ENCODE measurements at regions of chr1 and their contacts with region 1.

Region 1: DNA sequence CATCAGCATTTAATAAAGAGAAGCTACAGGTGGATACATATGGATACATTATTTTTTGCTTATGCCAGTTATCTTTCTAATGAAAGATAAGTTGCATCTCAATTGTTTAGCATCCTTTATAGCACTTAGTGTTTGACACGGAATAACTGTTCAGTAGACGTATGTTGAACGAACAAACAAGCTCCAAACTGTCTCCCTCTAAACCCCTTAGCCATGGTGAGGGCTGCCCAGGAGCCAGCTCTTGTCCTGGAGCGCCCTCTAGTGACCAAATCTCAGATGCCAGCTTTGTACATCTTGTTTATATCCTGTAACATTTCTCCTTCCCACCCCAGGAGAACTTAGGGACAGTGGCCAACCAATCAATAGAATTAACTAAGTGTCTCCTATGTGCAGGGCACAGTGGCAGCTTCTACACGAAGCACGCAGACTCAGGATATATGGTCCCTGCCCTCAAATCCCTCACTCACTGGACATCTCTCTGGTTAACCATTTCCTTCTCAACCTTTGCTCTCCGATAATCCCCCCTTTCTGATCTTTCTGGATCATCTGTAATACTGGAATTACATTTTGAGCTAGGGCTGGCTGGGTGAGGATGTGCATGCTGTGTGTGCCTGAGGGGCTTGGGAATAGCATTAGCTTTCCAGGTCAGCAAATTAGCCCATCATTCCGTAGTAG is 22.9 kb downstream of the KCNA10 start:
- H3K4me3 Mint-ChIP-seq: no peak overlapping the region
- H3K27ac Mint-ChIP-seq: no peak overlapping the region
- H3K4me1 Mint-ChIP-seq: peaks cover 30% of the 10 kb centered on the region
- H3K27me3 Mint-ChIP-seq: peaks cover 5% of the 10 kb centered on the region

Region 2: DNA sequence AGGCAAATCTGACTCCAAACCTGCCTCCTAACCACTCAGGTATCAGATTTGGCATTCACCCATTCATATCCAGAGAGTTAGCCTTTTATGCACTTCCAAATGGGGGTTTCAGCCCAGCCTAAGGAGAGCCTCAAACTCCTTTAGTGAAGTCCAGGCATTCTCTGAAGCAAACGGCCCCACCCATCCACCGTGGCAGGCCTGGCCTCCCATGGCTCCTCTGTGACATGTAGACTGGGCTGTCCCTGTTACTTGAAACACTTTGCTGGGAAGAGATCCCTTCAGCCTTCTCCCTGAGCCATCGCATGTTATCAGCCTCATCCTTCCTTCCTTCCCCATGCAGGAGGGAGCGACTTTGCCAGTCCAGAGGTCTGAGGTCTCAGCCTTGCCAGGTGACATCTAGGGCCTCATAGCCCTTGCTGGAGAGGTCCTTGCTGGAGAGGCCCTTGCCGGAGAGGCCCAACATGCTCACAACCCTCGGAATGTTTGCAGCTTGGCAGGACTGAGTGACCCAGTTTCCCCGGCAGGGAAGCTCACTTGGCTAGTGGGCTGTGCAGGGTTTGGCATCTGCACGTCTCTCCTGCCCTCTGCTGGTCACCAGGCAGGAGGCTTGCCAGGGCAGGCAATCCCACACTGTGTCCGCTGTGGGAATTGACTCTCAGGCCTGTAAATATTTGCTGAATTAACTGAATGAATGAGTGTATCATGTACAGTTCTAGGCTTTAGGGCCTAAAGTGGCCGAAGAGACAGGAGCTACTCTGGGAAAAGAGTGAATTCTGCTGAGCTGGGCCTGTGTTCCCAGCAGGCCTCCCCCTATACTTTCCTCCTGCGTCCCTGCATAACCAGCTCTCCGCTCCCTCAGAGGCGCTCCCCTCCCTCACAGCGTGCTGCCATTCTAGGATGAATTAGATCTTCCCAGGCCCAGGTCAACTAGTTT is 183.6 kb before region 1 on chr1:
- intact Hi-C with region 1: loop called (anchors 5 kb)
- H3K4me3 Mint-ChIP-seq: no peak overlapping the region
- H3K27ac Mint-ChIP-seq: no peak overlapping the region
- H3K4me1 Mint-ChIP-seq: peaks cover 14% of the 10 kb centered on the region
- H3K27me3 Mint-ChIP-seq: no peaks in the 10 kb centered on the region

Region 3: GRCh38 chr1:110412576-110412975 is 83.5 kb before region 1 on chr1:
- intact Hi-C with region 1: loop called (anchors 1 kb)
- H3K4me3 Mint-ChIP-seq: no peak overlapping the region
- H3K27ac Mint-ChIP-seq: peak overlapping the region; percentile 58
- H3K4me1 Mint-ChIP-seq: peaks cover 28% of the 10 kb centered on the region
- H3K27me3 Mint-ChIP-seq: no peaks in the 10 kb centered on the region

Region 4: DNA sequence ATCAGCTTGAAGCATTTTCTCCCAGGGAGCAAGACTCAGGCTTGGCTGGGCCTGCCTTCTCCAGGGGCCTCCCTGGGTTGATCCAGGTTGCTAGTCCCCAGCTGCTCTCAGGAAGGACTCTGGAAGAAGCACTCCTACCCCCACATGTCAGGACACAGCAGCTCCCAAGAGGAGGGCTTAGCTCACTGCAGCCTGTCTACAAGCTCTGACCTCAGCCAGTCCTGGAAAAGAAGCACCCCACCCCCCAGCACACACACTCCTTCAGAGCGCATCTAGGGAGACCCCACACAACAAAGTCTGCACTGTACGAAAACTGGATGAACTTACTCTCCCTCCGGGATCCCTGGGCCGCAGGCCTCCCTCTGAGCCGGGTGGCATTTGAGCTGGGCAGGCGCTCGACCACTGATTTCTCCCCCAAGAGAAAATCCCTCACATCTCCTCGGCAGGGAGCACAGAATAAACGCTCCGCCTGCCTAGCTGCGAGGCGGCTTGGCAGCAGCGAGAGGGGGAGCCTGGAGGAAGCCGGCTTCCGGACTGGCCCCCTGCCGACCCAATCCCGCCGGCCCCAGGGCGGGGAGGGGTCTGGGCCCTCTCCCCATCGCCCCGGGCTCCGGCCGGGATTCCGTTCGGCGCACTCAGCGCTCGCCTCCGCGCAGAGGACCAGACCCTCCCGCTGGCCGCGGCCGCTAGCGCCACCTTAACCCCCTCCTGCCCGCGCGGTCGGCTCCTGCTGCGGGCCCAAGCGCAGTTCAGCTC is 110.0 kb after region 1 on chr1 and contains the start of gene KCNA2:
- intact Hi-C with region 1: no loop called
- H3K4me3 Mint-ChIP-seq: peak within 1 kb of the TSS; percentile 79
- H3K27ac Mint-ChIP-seq: no peak within 1 kb of the TSS
- H3K4me1 Mint-ChIP-seq: peaks cover 20% of the 10 kb centered on the region
- H3K27me3 Mint-ChIP-seq: peaks cover 78% of the 10 kb centered on the region